ENCODE measurements at regions of chr6 and their contacts with region 1.

Region 1: GRCh38 chr6:29887819-29888776 is 54.2 kb upstream of the HLA-A start:
- DNase-seq: peak in 1 of 2 experiments; percentile 57
- H3K4me3 ChIP-seq: peak overlapping the region; percentile 41; the same call in 1 of the 2 replicates
- H3K27ac ChIP-seq: no peak overlapping the region
- H3K4me1 ChIP-seq: no peaks in the 10 kb centered on the region
- H3K27me3 ChIP-seq: no peaks in the 10 kb centered on the region
- CTCF ChIP-seq: no peak

Region 2: DNA sequence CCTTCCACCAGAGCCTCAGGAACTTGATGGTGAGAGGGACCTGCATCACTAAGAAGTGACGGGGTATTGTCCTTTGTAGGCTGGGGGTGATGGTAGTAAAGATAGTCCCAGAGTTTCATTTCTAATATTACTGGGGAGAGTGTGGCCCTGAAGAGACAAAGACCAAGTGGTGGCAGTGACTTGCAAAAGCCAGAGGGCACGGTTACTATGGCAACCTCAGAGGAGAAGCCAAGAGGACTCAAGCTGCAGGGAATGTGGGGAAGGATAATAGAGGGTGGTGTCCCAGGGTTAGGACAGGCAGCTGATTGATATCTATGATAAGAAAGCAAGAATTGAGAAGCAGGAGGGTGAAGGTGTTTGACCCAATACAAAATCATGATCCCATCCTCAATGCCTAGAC is 18.0 kb before region 1 on chr6:
- CTCF ChIA-PET with region 1: no interaction called
- POLR2A ChIA-PET with region 1: no interaction called
- intact Hi-C with region 1: no loop called
- DNase-seq: no peak
- H3K4me3 ChIP-seq: no peak overlapping the region
- H3K27ac ChIP-seq: no peak overlapping the region
- H3K4me1 ChIP-seq: no peaks in the 10 kb centered on the region
- H3K27me3 ChIP-seq: peaks cover 15% of the 10 kb centered on the region
- CTCF ChIP-seq: no peak

Region 3: GRCh38 chr6:29942275-29943052 is 54.4 kb after region 1 on chr6 and contains the start of gene HLA-A:
- CTCF ChIA-PET with region 1: no interaction called
- POLR2A ChIA-PET with region 1: no interaction called
- intact Hi-C with region 1: loop called (anchors 1 kb)
- DNase-seq: peak; percentile 85 to 86
- H3K4me3 ChIP-seq: peak within 1 kb of the TSS; percentile 55
- H3K27ac ChIP-seq: no peak within 1 kb of the TSS
- H3K4me1 ChIP-seq: no peaks in the 10 kb centered on the region
- H3K27me3 ChIP-seq: no peaks in the 10 kb centered on the region
- CTCF ChIP-seq: no peak
- total RNA-seq, gene HLA-A: 168 and 261 TPM in 2 replicates

Measured in PC-9 (cell line).